ENCODE measurements at regions of chr2 and their contacts with region 1.

Region 1: DNA sequence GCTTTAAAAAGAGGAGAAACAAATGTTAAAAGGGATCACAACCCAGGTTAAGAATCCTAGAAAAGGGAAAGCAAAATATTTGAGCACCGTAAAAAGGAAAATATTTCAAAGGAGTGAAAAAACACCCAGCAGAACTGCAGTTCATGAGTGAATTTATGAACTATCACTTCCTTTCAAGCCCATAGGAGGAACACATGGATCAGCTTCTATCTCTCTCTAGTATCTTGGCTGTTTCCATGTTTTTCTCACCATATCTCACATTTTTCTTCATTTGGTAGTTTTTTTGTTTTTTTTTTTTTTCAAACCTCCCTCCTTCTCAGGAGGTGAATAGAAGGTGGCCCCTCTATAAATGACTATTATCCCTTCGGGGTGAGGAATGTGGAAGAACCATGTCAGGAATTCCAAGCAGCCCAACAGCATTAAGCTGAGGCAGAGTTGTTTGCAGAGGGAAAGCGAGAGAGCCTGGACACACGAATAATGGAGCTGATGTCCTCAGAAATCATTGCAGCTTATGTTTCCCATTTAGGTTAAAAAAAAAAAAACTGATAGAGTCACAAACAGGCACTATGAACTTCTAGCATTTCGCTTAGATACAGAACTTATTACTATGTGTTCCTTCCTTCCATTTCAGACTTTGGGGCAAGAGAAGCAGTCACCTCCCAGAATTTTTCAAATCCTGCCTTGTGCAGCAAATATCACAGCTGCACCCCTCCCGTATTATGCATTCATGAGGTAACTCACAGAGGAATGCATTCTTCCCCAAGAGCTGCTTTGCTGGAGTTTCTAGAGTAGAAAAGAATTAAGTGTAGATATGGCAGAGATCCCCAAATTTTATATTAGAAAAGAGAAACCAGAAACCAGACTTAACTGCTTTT is 315.6 kb downstream of the IRS1 start:
- DNase-seq: peak; percentile 50 to 68
- H3K4me3 ChIP-seq: no peak overlapping the region
- H3K27ac ChIP-seq: no peak overlapping the region
- H3K4me1 ChIP-seq: peaks cover 20% of the 10 kb centered on the region
- H3K27me3 ChIP-seq: no peaks in the 10 kb centered on the region
- CTCF ChIP-seq: no peak

Region 2: DNA sequence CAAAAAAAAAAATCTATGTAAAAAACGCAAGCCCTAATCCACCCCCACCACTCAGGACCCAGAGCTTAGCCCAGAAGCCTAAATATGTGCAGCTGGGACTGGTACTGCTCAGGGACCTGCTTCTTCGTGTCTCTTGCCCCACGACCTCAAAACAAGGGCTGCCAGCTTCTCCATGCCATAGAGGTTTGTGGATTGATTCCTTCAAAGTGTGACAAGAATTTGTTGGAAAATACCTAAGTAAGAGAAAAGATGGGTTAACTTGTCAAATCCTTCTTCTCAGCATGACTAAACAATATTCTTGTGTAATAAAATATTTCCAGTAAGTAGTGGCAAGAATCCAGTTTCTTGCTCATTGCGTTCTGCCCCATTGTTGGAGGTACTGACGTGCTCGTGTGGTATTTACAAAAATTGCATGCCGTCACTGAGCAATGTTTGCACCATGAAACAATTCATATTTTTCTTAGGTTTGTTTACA is 904.6 kb after region 1 on chr2:
- CTCF ChIA-PET with region 1: no interaction called
- POLR2A ChIA-PET with region 1: interaction called, 14 read pairs
- intact Hi-C with region 1: no loop called
- DNase-seq: peak; percentile 56 to 93
- H3K4me3 ChIP-seq: no peak overlapping the region
- H3K27ac ChIP-seq: peak overlapping the region; percentile 99
- H3K4me1 ChIP-seq: peaks cover 54% of the 10 kb centered on the region
- H3K27me3 ChIP-seq: no peaks in the 10 kb centered on the region
- CTCF ChIP-seq: no peak